GM12878 (cell line): ENCODE measurements at regions of chr7 and their contacts with region 1.

Region 1: GRCh38 chr7:142811154-142811737 is 40.5 kb downstream of the PRSS2 start:
- DNase-seq: no peak
- ATAC-seq: peak; percentile 1; the same call in 2 of the 3 replicates
- H3K4me3 ChIP-seq: no peak overlapping the region
- H3K27ac ChIP-seq: peak overlapping the region; percentile 24; the same call in 1 of the 2 replicates
- H3K4me1 ChIP-seq: peaks cover 46% of the 10 kb centered on the region
- H3K27me3 ChIP-seq: no peaks in the 10 kb centered on the region
- CTCF ChIP-seq: peak; percentile 55 to 73 (median 65)
- EP300 ChIP-seq: no peak
- POLR2A ChIP-seq: no peak
- RAD21 ChIP-seq: peak; percentile 94

Region 2: GRCh38 chr7:141563956-141564631 is 1247.2 kb before region 1 on chr7:
- CTCF ChIA-PET with region 1: no interaction called
- POLR2A ChIA-PET with region 1: no interaction called
- RAD21 ChIA-PET with region 1: no interaction called
- SMC1A ChIA-PET with region 1: no interaction called
- in situ Hi-C with region 1: loop called (anchors 10 kb)
- intact Hi-C with region 1: no loop called
- DNase-seq: peak; percentile 60
- ATAC-seq: peak; percentile 94
- H3K4me3 ChIP-seq: no peak overlapping the region
- H3K27ac ChIP-seq: peak overlapping the region; percentile 45
- H3K4me1 ChIP-seq: peaks cover 7% of the 10 kb centered on the region
- H3K27me3 ChIP-seq: no peaks in the 10 kb centered on the region
- CTCF ChIP-seq: no peak
- EP300 ChIP-seq: no peak
- POLR2A ChIP-seq: no peak
- RAD21 ChIP-seq: no peak

Region 3: GRCh38 chr7:142301923-142302550 is 509.2 kb before region 1 on chr7:
- CTCF ChIA-PET with region 1: no interaction called
- POLR2A ChIA-PET with region 1: no interaction called
- RAD21 ChIA-PET with region 1: no interaction called
- SMC1A ChIA-PET with region 1: no interaction called
- in situ Hi-C with region 1: no loop called
- intact Hi-C with region 1: no loop called
- DNase-seq: no peak
- ATAC-seq: peak; percentile 75
- H3K4me3 ChIP-seq: no peak overlapping the region
- H3K27ac ChIP-seq: no peak overlapping the region
- H3K4me1 ChIP-seq: no peaks in the 10 kb centered on the region
- H3K27me3 ChIP-seq: no peaks in the 10 kb centered on the region; a peak in 1 of 4 replicates
- CTCF ChIP-seq: peak; percentile 51 to 65 (median 63)
- EP300 ChIP-seq: no peak
- POLR2A ChIP-seq: no peak
- RAD21 ChIP-seq: peak; percentile 33

Region 4: GRCh38 chr7:142626420-142627035 is 184.7 kb before region 1 on chr7:
- CTCF ChIA-PET with region 1: interaction called, 185 read pairs
- POLR2A ChIA-PET with region 1: no interaction called
- RAD21 ChIA-PET with region 1: interaction called, 75 read pairs
- SMC1A ChIA-PET with region 1: interaction called, 68 read pairs
- in situ Hi-C with region 1: loop called (anchors 5 kb)
- intact Hi-C with region 1: no loop called
- DNase-seq: no peak
- ATAC-seq: peak; percentile 96
- H3K4me3 ChIP-seq: no peak overlapping the region
- H3K27ac ChIP-seq: no peak overlapping the region
- H3K4me1 ChIP-seq: no peaks in the 10 kb centered on the region
- H3K27me3 ChIP-seq: peaks cover 0 to 3% of the 10 kb centered on the region in 2 experiments; a peak in 1 of 4 replicates
- CTCF ChIP-seq: peak; percentile 56 to 79 (median 69)
- EP300 ChIP-seq: no peak
- POLR2A ChIP-seq: no peak
- RAD21 ChIP-seq: peak; percentile 37

Region 5: GRCh38 chr7:142689439-142690120 is 121.7 kb before region 1 on chr7:
- CTCF ChIA-PET with region 1: interaction called, 53 read pairs
- POLR2A ChIA-PET with region 1: no interaction called
- RAD21 ChIA-PET with region 1: interaction called, 21 read pairs
- SMC1A ChIA-PET with region 1: interaction called, 34 read pairs
- in situ Hi-C with region 1: no loop called
- intact Hi-C with region 1: loop called (anchors 1 kb)
- DNase-seq: no peak
- ATAC-seq: peak; percentile 38
- H3K4me3 ChIP-seq: no peak overlapping the region
- H3K27ac ChIP-seq: no peak overlapping the region
- H3K4me1 ChIP-seq: peaks cover 3% of the 10 kb centered on the region; the same call in 1 of the 2 replicates
- H3K27me3 ChIP-seq: no peaks in the 10 kb centered on the region
- CTCF ChIP-seq: peak in 2 of 3 experiments; percentile 5 to 22; a peak in 1 of 6 replicates
- EP300 ChIP-seq: no peak
- POLR2A ChIP-seq: no peak
- RAD21 ChIP-seq: peak; percentile 24; the same call in 1 of the 2 replicates

Region 6: GRCh38 chr7:142771353-142771723 is 39.9 kb before region 1 on chr7:
- CTCF ChIA-PET with region 1: interaction called, 1,055 read pairs
- POLR2A ChIA-PET with region 1: interaction called, 18 read pairs
- RAD21 ChIA-PET with region 1: interaction called, 118 read pairs
- SMC1A ChIA-PET with region 1: interaction called, 786 read pairs
- in situ Hi-C with region 1: no loop called
- intact Hi-C with region 1: no loop called
- DNase-seq: peak; percentile 73
- ATAC-seq: peak; percentile 89
- H3K4me3 ChIP-seq: no peak overlapping the region
- H3K27ac ChIP-seq: no peak overlapping the region
- H3K4me1 ChIP-seq: peaks cover 19% of the 10 kb centered on the region
- H3K27me3 ChIP-seq: no peaks in the 10 kb centered on the region
- CTCF ChIP-seq: no peak
- EP300 ChIP-seq: peak; percentile 43 to 51; a peak in 2 of 4 replicates
- POLR2A ChIP-seq: no peak
- RAD21 ChIP-seq: no peak

Region 7: DNA sequence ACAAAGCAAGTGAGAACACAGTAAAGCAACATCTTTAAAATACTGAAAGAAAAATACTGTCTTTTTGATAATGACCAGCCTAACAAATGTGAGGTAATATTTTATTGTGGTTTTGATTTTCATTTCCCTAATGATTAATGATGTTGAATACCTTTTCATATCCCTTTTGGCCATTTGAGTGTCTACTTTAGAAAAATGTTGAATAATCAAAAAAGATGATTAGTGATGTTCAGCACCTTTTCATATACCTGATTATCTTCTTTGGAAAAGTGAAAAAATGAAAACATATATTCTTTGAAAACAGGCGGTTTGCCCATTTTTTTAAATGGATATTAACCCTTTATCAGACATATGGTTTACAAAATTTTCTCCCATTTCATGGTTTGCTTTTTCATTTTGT is 11.5 kb after region 1 on chr7:
- CTCF ChIA-PET with region 1: interaction called, 14 read pairs
- POLR2A ChIA-PET with region 1: interaction called, 4 read pairs
- RAD21 ChIA-PET with region 1: interaction called, 11 read pairs
- SMC1A ChIA-PET with region 1: interaction called, 44 read pairs
- in situ Hi-C with region 1: no loop called
- intact Hi-C with region 1: no loop called
- DNase-seq: no peak
- ATAC-seq: no peak
- H3K4me3 ChIP-seq: no peak overlapping the region
- H3K27ac ChIP-seq: no peak overlapping the region
- H3K4me1 ChIP-seq: no peaks in the 10 kb centered on the region
- H3K27me3 ChIP-seq: no peaks in the 10 kb centered on the region
- CTCF ChIP-seq: no peak
- EP300 ChIP-seq: no peak
- POLR2A ChIP-seq: no peak
- RAD21 ChIP-seq: no peak

Region 8: GRCh38 chr7:142853739-142854371 is 42.6 kb after region 1 on chr7:
- CTCF ChIA-PET with region 1: interaction called, 13 read pairs
- POLR2A ChIA-PET with region 1: interaction called, 7 read pairs
- RAD21 ChIA-PET with region 1: interaction called, 9 read pairs
- SMC1A ChIA-PET with region 1: interaction called, 10 read pairs
- in situ Hi-C with region 1: no loop called
- intact Hi-C with region 1: no loop called
- DNase-seq: no peak
- ATAC-seq: peak; percentile 92
- H3K4me3 ChIP-seq: peak overlapping the region; percentile 96
- H3K27ac ChIP-seq: no peak overlapping the region
- H3K4me1 ChIP-seq: no peaks in the 10 kb centered on the region
- H3K27me3 ChIP-seq: peaks cover 0 to 8% of the 10 kb centered on the region in 2 experiments
- CTCF ChIP-seq: peak; percentile 75 to 83 (median 81)
- EP300 ChIP-seq: no peak
- POLR2A ChIP-seq: no peak
- RAD21 ChIP-seq: peak; percentile 71

Region 9: GRCh38 chr7:143408686-143409561 is 597.7 kb after region 1 on chr7 and contains the start of gene EPHA1:
- CTCF ChIA-PET with region 1: no interaction called
- POLR2A ChIA-PET with region 1: no interaction called
- RAD21 ChIA-PET with region 1: no interaction called
- SMC1A ChIA-PET with region 1: no interaction called
- in situ Hi-C with region 1: no loop called
- intact Hi-C with region 1: no loop called
- DNase-seq: no peak
- ATAC-seq: peak; percentile 52
- H3K4me3 ChIP-seq: no peak within 1 kb of the TSS
- H3K27ac ChIP-seq: no peak within 1 kb of the TSS
- H3K4me1 ChIP-seq: peaks cover 3% of the 10 kb centered on the region
- H3K27me3 ChIP-seq: peaks cover 0 to 4% of the 10 kb centered on the region in 2 experiments; a peak in 2 of 4 replicates
- CTCF ChIP-seq: peak; percentile 19 to 22 (median 21); a peak in 2 of 6 replicates
- EP300 ChIP-seq: no peak
- POLR2A ChIP-seq: no peak
- RAD21 ChIP-seq: no peak
- polyA plus RNA-seq, gene EPHA1: not detected